GM10248 (cell line): ENCODE measurements at regions of chr17 and their contacts with region 1.

Region 1: DNA sequence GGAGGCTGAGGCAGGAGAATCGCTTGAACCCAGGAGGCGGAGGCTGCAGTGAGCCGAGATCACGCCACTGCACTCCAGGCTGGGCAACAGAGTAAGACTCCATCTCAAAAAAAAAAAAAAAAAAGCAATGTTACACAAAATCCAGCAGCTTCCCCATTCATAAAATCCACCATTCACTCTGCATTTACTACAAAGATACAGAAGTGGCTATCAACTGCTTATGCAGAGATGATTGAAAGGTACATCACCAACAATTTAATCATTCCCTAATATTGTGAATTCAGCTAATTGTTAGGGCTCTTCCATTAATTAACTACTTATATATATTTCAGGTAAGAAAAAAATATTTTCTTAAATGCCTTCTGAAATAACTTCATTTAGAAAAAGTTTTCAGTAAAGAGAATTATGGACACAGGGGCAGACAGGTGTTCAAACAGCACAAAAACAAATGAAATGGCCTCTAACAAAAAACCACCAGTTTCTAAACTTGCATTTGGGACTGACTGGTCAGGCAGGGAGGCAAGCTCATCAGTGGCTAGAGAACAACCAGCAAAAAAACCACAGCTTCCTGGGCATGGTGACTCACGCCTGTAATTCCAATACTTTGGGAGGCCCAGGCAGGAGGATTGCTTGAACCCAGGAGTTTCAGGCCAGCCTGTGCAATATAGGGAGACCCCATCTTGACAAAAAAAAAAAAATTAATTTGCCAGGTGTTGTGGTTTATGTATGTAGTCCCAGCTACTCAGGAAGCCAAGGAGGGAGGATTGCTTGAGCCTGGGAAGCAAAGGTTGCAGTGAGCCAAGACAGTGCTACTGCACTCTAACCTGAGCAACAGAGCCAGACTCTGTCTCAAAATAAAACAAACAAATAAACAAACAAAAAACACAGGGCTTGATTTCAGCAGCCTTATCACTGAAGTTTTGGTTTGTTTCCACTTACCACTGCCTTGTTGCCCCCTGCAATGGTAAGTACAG is 26.3 kb downstream of the ERN1 start:
- DNase-seq: no peak
- CTCF ChIP-seq: no peak

Region 2: GRCh38 chr17:64091116-64091515 is 12.6 kb before region 1 on chr17:
- CTCF ChIA-PET with region 1: interaction called, 14 read pairs
- POLR2A ChIA-PET with region 1: interaction called, 3 read pairs
- DNase-seq: peak; percentile 55
- CTCF ChIP-seq: no peak